ENCODE measurements at regions of chr11 and their contacts with region 1.

Region 1: GRCh38 chr11:1515082-1516060 is 28.8 kb upstream of the MOB2 start:
- DNase-seq: peak; percentile 91
- H3K4me3 Mint-ChIP-seq: no peak overlapping the region
- H3K27ac Mint-ChIP-seq: no peak overlapping the region
- H3K4me1 Mint-ChIP-seq: peaks cover 2% of the 10 kb centered on the region
- H3K27me3 Mint-ChIP-seq: no peaks in the 10 kb centered on the region

Region 2: DNA sequence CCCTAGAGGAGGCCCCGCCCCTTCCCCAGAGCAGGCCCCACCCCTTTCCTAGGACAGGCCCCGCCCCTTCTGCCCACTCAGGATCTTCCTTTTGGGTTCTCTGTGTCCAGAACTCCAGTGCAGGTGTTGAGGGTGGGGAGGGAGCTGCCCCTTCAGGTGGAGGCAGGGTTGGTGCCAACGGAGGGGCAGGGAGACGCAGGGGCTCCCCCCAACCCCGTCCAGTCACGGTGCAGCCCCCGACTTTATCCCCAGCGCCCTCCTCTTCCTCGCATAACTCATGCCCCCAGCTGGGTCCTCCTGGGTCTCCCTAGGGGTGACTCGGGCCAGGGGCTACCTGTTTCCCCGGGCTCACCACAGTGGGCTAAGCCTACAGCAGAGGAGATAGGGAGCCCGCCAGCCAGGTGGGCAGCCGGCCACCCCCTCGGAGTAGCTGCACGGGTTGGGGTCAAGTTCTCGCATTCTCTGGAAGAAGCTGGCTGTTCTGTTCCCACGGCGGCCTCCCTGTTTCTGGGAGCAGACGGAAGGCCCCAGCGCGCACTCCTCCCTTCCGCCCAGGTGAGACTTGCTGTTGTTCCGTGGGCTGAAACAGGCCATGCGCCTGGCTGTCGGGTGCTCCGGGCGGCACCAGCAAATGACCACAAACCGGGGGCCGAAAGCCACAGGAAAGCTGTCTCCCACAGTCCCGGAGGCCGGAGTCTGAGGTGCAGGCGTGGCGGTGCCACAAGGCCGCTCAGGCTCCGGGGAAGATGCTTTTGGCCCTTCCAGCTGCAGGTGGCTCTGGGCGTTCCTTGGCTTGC is 401.8 kb before region 1 on chr11:
- intact Hi-C with region 1: loop called (anchors 10 kb)
- DNase-seq: no peak
- H3K4me3 Mint-ChIP-seq: no peak overlapping the region
- H3K27ac Mint-ChIP-seq: no peak overlapping the region
- H3K4me1 Mint-ChIP-seq: no peaks in the 10 kb centered on the region
- H3K27me3 Mint-ChIP-seq: no peaks in the 10 kb centered on the region

Region 3: DNA sequence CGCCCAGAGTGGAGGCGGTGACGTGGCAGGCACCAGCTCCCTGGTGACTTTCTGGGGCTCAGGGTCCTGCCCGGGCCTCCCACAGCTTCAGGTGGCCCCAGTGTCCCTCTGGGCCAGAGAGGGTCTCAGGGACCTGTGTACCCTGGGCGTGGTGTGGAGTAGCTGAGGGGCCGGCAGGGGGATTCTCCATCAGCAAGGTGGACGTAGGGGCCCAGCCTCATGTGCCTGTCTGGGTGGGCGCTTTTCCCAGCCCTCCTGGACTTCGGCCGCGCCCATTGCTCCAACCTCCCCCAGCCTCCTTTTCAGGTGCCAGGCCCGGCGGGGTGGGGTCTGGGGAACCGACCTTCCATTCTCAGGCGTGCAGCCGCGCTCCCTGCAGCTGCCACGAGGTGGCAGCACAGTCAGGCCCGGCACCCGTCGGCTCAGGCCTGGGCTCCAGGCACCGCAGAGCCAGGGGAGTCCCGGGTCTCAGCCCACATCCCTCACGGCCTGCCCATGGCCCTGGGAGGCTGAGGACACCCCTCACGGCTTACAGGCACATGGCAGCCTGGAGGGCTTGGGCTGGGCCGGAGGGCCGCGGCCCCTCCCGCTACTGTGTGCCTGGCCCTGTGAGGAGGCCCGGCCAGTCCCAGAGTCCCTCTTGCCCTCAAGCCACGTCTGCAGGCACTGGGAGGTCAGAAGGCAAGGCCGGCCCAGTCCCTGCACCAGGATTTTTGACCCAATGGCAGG is 312.4 kb before region 1 on chr11:
- intact Hi-C with region 1: loop called (anchors 1 kb)
- DNase-seq: peak; percentile 90
- H3K4me3 Mint-ChIP-seq: no peak overlapping the region
- H3K27ac Mint-ChIP-seq: no peak overlapping the region
- H3K4me1 Mint-ChIP-seq: no peaks in the 10 kb centered on the region
- H3K27me3 Mint-ChIP-seq: no peaks in the 10 kb centered on the region

Region 4: DNA sequence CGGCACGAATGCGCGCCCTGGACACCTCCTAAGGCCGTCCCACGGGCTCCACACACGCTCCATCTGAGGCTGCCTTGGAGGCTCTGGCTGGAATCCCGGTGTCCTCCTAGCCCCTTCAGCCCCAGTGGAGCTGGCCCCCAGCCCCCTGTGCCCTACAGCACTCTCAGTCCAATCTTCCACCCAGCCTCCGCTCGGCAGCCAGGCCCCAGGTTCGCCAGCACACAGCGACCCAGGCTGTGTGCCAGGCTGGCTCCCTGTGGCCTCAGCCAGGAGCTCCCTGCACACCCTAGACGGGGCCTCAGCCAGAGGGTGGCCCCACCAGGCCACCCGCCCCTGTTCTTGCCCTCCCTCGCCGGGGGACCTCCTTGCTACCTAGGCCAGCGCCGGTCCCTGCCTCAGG is 47.4 kb before region 1 on chr11:
- intact Hi-C with region 1: no loop called
- DNase-seq: no peak
- H3K4me3 Mint-ChIP-seq: no peak overlapping the region
- H3K27ac Mint-ChIP-seq: no peak overlapping the region
- H3K4me1 Mint-ChIP-seq: no peaks in the 10 kb centered on the region
- H3K27me3 Mint-ChIP-seq: no peaks in the 10 kb centered on the region

Region 5: GRCh38 chr11:1478544-1478943 is 36.8 kb before region 1 on chr11:
- intact Hi-C with region 1: no loop called
- DNase-seq: no peak
- H3K4me3 Mint-ChIP-seq: no peak overlapping the region
- H3K27ac Mint-ChIP-seq: no peak overlapping the region
- H3K4me1 Mint-ChIP-seq: no peaks in the 10 kb centered on the region
- H3K27me3 Mint-ChIP-seq: no peaks in the 10 kb centered on the region

Region 6: DNA sequence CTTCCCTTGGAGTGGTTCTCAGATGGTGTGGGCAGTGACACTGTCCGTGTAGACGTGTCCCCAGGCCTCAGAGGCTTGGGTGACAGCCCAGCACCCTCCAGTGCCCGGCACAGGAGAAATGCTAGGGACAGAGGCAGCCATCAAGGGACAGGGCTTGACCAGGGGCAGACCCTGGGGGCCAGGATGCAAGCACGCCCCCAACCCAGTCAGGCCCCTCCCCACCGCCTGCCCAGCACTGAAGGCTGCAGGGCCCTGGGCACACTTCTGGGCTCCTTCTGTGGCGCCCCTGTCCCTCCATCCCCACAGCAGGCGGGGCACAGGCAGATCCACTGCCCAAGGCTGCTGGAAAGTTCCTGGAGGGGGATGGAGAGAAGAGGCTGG is 612.7 kb after region 1 on chr11:
- intact Hi-C with region 1: no loop called
- DNase-seq: no peak
- H3K4me3 Mint-ChIP-seq: no peak overlapping the region
- H3K27ac Mint-ChIP-seq: no peak overlapping the region
- H3K4me1 Mint-ChIP-seq: no peaks in the 10 kb centered on the region
- H3K27me3 Mint-ChIP-seq: peaks cover 14% of the 10 kb centered on the region

Measured in activated CD4-positive, alpha-beta T cell treated with anti-CD3 and anti-CD28 coated beads, Interleukin-2, amount 10 ng/mL, durations not matched to agents 24 days and 14 days (primary cell).